ENCODE measurements at regions of chr14 and their contacts with region 1.

Region 1: DNA sequence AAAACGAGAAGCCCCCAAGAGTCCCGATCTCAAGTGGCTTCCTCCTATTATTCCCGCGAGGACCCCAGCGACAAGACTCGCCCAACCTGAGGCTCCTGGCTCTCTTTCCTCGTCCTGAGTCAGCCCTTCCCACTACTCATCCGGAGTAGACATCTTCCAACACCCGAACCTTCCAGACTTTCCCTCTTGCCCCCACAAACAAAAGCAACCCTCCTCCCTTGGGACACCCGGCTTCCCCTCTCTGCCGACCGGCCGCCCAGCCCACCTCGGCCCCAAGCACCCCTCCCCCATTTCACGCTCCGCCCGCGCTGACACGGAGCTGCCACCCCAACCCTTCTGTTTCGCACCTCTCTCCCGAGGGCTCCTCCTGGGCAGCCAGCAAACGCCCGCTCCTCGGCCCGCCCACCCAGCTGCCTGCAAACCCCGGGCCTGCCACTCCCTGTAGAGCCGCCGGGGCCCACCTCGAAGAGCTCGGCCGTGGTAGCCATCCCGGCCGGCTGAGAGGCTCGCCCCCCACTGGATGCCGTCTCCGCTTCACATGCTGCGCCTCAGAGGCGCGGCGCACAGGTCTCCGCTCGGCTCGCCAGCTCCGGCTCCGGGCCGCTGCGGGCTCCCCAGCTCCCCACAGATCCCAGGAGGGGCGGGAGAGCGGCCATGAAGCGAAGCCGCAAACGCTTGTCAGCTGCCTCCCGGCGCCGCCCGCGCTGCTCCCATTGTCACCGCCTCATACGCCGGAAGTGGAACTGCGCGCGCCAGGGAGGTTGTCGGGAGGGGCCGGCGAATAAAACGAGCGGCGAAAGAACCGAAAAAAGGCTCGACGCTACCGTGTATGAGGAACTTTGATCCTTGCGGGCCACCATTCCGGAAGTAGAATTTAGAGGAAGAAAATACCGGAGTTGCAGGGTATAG is at the starts of genes AP5M1 and EXOC5:
- DNase-seq: peak; percentile 91
- H3K4me3 Mint-ChIP-seq: peak within 1 kb of the TSS; percentile 100
- H3K27ac Mint-ChIP-seq: peak within 1 kb of the TSS; percentile 100
- H3K4me1 Mint-ChIP-seq: peaks cover 51% of the 10 kb centered on the region
- H3K27me3 Mint-ChIP-seq: no peaks in the 10 kb centered on the region
- total RNA-seq, gene AP5M1: 43.9 and 49.7 TPM in 2 replicates
- total RNA-seq, gene EXOC5: 79.7 and 81.5 TPM in 2 replicates

Region 2: GRCh38 chr14:56579345-56580220 is 688.8 kb before region 1 on chr14 and contains the start of gene TMEM260:
- intact Hi-C with region 1: loop called (anchors 5 kb)
- DNase-seq: peak; percentile 85
- H3K4me3 Mint-ChIP-seq: peak within 1 kb of the TSS; percentile 91
- H3K27ac Mint-ChIP-seq: peak within 1 kb of the TSS; percentile 90
- H3K4me1 Mint-ChIP-seq: peaks cover 26% of the 10 kb centered on the region
- H3K27me3 Mint-ChIP-seq: no peaks in the 10 kb centered on the region
- total RNA-seq, gene TMEM260: 15.9 and 16.8 TPM in 2 replicates

Region 3: DNA sequence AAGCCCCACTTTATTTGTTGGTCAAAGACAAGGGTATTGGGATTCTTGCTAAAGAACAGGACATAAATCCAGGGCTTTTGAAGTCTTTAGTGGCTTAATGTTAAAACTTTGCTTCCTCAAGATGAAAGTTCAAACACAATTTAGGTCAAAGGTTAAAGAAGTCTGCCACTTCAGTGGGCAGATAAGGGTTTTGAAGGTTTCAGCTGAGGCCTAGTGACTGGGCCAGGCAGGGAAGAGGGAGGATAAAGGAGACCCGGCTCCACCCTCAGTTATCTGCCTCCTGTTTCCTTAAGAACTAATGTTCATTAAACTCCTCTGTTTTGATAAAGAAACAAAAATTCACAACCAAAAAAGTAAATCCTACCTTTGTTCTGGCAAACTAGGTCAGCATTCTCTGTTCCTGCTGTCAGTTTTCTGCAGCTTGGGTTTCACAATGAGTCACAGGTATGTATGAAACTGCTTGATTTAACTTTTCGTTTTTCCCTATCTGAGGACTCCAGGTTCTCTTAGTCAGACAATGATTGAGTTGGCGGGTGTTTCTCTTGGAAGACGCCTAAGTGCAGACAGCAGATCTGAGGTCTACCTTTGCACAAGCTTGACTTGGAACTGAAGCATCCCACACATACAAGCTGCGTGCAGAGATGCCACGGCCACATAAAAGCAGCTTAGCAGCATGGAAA is 208.0 kb before region 1 on chr14:
- intact Hi-C with region 1: loop called (anchors 1 kb)
- DNase-seq: peak; percentile 9
- H3K4me3 Mint-ChIP-seq: no peak overlapping the region
- H3K27ac Mint-ChIP-seq: peak overlapping the region; percentile 41
- H3K4me1 Mint-ChIP-seq: peaks cover 19% of the 10 kb centered on the region
- H3K27me3 Mint-ChIP-seq: peaks cover 14% of the 10 kb centered on the region

Region 4: DNA sequence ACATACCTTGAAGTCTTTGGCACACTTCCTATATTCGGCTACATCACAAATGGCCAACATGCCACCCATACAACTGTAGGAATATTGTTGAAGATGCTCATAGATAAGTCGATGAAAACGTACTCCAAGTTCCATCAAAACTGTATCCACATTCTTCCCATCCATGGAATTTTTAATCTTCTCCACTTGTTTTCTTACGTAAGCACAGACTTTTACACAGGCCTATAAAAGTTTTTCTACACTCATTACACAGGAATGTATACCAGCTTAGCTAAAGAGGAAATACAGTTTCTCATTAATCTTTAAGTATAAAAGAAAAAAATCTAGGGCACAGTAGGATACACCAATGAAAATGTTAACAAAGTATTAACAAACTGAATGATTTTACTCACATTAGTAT is 58.9 kb before region 1 on chr14:
- intact Hi-C with region 1: no loop called
- DNase-seq: no peak
- H3K4me3 Mint-ChIP-seq: no peak overlapping the region
- H3K27ac Mint-ChIP-seq: no peak overlapping the region
- H3K4me1 Mint-ChIP-seq: no peaks in the 10 kb centered on the region
- H3K27me3 Mint-ChIP-seq: no peaks in the 10 kb centered on the region

Region 5: GRCh38 chr14:57390028-57390805 is 121.8 kb after region 1 on chr14 and contains the start of gene NAA30:
- intact Hi-C with region 1: loop called (anchors 2 kb)
- DNase-seq: peak; percentile 90
- H3K4me3 Mint-ChIP-seq: peak within 1 kb of the TSS; percentile 93
- H3K27ac Mint-ChIP-seq: peak within 1 kb of the TSS; percentile 91
- H3K4me1 Mint-ChIP-seq: peaks cover 37% of the 10 kb centered on the region
- H3K27me3 Mint-ChIP-seq: no peaks in the 10 kb centered on the region
- total RNA-seq, gene NAA30: 16.8 and 17.8 TPM in 2 replicates

Region 6: GRCh38 chr14:57420986-57421385 is 152.6 kb after region 1 on chr14:
- intact Hi-C with region 1: no loop called
- DNase-seq: no peak
- H3K4me3 Mint-ChIP-seq: no peak overlapping the region
- H3K27ac Mint-ChIP-seq: no peak overlapping the region
- H3K4me1 Mint-ChIP-seq: no peaks in the 10 kb centered on the region
- H3K27me3 Mint-ChIP-seq: peaks cover 2% of the 10 kb centered on the region